Left cardiac atrium (tissue), 4 donors: ENCODE measurements at regions of chr2 and their contacts with region 1.

Region 1: DNA sequence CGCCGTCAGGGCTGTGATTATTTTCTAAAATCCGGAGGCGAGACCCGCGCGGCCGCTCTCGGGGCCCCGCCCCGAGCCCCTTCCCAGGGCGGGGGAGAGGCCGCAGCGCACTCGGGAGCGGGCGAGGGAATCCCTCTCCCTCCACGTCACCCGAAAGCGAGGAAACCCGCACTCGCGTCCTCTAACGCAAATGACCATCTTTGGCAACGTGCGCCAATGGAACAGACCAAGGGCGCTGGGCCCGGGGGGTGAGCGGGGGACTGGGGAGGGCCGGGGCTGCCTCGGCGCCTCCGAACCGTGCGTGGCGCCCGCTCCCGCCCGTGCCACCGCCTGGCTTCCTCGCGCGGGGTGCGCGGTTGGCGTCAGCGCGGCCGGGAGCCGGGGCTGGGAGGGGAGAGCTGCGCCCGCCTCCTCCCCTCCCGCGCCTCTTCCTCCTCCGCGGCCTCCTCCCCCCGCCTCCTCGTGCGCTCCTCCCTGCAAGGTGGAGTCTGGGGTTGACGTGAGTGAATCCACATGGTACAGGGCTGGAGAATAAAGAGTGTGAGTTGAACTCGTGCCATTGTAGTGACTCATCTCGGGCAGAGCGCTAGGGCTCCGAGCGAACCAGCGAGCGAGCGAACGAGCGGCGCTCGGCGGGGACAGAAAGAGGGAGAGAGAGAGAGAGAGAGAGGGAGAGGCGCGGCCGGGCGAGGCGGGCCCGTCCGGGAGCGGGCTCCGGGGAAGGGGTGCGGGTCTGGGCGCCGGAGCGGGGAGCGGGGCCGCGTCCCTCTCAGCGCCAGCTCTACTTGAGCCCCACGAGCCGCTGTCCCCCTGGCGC is at the start of gene FOSL2:
- DNase-seq: peak; percentile 95
- ATAC-seq: peak; percentile 74 to 77
- total RNA-seq, gene FOSL2: 66.6 to 140 TPM

Region 2: GRCh38 chr2:27703638-27704341 is 688.7 kb before region 1 on chr2:
- intact Hi-C with region 1: loop called (anchors 10 kb)
- DNase-seq: peak; percentile 81
- ATAC-seq: peak; percentile 40 to 74

Region 3: GRCh38 chr2:27890146-27890923 is 502.2 kb before region 1 on chr2 and contains the starts of genes BABAM2 and RBKS:
- intact Hi-C with region 1: loop called in 1 of 2 experiments (anchors 5 kb)
- DNase-seq: peak; percentile 89
- ATAC-seq: peak; percentile 98
- total RNA-seq, gene BABAM2: 46.8 to 59.7 TPM
- total RNA-seq, gene RBKS: 3.3 TPM

Region 4: GRCh38 chr2:28164280-28164801 is 228.2 kb before region 1 on chr2:
- intact Hi-C with region 1: loop called in 1 of 2 experiments (anchors 10 kb)
- DNase-seq: peak; percentile 21
- ATAC-seq: peak; percentile 88 to 90

Region 5: DNA sequence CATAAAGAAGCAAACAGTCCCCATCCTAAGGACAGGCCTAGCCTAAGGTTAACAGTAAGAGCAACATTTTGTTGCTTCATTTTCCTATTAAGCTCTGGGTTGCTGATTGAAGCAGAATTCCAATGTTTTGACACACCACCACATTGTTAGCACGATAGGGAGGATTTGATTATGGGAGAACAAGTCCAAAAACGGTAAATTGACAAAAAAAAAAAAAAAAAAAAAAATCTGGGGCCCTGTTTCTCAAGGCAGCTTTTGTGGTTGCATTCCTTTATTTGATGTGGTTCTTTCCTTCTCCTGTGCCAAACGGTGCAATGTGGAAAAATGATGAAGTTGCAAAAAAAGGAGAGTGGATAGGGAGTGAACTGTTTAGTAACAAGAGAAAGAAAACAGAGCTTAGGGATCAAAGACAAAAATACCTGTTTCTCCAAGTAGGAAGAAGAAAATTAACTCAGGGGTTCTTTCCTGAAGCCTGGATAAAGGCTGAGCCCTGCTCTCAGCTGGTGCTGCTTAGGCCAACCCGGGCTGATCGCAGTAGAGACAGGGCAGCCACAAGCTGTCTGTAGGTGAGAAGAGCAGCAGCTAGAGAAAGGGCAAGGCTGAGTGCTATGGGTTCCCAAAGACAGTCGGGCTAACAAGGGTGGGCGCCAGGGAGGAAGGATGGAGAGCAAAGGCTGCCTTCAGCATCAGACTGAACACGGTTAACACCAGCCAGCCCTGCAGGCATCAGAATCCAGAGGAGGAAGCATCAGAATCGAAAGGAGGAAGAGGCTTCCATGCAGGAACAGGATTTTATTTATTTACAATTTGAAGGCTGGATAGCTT is 167.6 kb before region 1 on chr2:
- intact Hi-C with region 1: loop called in 1 of 2 experiments (anchors 5 kb)
- DNase-seq: no peak
- ATAC-seq: peak; percentile 47 to 75

Region 6: DNA sequence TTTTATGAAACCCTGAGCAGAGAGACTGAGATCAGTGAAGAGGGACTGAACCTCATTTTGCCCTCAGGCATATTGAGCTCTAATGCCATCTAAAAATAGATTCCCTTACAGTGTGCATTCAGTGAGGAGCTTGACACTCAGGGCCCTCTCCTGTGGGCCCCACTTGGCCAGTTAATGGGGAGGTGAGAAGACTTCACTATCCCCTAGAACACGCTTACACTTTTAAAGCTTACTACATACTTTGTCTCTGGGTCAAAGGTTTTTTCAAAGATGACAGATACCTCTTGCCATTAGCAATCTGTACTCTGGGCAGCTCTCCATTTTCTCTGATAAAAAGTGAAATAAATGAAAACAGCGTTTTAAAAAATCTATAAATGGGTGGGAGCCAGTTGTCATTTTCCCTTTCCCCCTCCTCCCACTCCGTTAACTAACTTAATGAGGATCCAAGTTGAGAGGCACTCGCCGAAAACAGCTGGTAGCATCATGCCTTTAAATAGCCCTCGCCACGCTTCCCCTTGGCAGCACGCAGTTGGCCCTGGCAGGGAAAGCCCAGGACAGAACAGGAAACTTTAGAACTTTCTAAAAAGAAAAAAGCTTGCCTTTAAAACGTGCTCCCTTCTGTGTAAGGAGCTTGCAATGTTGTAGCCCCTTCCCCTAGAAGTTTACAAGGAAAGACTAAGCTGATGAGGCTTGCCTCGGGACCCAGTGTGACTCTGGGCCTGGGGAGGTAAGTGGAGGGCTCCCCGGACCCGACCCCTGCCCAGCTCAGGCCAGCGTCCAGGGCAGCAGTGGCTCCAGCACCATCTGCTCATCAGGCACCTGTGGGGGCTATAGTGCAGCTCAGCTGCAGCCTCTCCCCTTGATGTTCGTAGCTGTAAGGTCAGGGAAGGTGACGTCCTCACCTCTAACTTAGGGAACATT is 58.6 kb before region 1 on chr2:
- intact Hi-C with region 1: loop called in 1 of 2 experiments (anchors 2 kb)
- DNase-seq: no peak
- ATAC-seq: peak; percentile 82 to 83